ENCODE measurements at regions of chr11 and their contacts with region 1.

Region 1: DNA sequence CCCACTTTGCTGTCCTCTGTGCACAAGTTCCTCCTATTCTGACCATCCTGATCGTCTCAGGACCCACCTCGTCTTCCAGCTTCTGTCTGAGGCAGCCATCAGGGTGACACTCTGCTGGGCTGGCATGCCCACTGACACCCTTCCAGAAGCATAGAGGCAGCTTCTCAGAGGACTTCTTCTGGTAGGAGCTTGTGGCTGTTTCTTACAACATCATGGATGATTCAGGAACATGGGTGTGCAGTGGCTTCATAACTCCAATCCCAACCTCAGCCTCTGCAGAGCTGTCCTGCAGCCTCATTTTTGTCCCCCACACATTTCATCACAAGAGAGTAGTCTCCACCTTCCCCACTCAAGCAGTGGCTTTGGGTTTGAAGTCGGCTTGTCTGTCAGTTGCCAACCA is 20.9 kb upstream of the CTR9 start:
- DNase-seq: no peak
- H3K4me3 ChIP-seq: no peak overlapping the region
- H3K27ac ChIP-seq: no peak overlapping the region
- H3K27me3 ChIP-seq: no peaks in the 10 kb centered on the region
- CTCF ChIP-seq: no peak

Region 2: GRCh38 chr11:10653926-10654810 is 76.0 kb before region 1 on chr11:
- intact Hi-C with region 1: loop called (anchors 5 to 10 kb)
- DNase-seq: no peak
- H3K4me3 ChIP-seq: no peak overlapping the region
- H3K27ac ChIP-seq: peak overlapping the region in 29 of 59 donors; percentile 4 to 71 (median 35)
- H3K27me3 ChIP-seq: no peaks in the 10 kb centered on the region
- CTCF ChIP-seq: peak; percentile 40 to 88 (median 75)

Region 3: DNA sequence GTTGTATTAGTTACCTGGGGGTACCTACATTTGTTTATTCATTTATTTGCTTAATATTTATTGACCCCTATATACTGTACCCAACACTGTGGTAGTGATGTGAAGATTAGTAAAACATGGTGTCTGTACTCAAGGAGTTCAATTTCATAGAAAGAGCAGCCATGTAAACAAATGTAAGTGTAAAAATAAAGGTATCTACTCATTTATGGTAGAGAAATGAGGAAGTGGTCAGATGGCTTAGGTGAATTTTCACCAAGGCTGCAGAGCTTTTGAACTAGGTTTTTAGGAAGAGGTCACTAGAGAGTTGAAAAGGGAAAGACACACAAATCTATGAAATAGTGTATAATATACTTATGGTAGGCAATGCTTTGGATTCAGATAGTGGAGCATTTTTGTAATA is 32.0 kb after region 1 on chr11:
- intact Hi-C with region 1: no loop called
- DNase-seq: no peak
- H3K4me3 ChIP-seq: no peak overlapping the region
- H3K27ac ChIP-seq: no peak overlapping the region
- H3K27me3 ChIP-seq: no peaks in the 10 kb centered on the region
- CTCF ChIP-seq: no peak

Region 4: DNA sequence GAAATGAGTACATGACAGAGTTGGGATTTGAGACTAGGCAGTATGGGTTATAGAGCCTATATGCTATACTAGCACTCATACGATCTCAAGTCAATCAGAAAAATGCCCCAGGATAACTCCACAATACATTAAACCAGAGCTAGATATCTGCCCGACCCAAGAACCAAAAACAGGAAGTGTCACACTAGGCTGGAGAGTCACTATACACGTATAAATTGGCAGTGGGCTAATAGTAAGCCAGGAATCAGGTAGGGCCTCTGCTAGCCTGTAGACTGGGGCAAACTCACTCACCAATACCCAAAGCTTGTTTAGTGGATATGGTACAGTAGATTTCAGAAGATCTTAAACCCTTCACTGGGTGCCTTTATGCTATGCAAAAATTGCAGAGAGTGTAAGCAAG is 94.7 kb after region 1 on chr11:
- intact Hi-C with region 1: no loop called
- DNase-seq: no peak
- H3K4me3 ChIP-seq: no peak overlapping the region
- H3K27ac ChIP-seq: no peak overlapping the region
- H3K27me3 ChIP-seq: no peaks in the 10 kb centered on the region
- CTCF ChIP-seq: no peak